K562 (cell line): ENCODE measurements at regions of chr3 and their contacts with region 1.

Region 1: DNA sequence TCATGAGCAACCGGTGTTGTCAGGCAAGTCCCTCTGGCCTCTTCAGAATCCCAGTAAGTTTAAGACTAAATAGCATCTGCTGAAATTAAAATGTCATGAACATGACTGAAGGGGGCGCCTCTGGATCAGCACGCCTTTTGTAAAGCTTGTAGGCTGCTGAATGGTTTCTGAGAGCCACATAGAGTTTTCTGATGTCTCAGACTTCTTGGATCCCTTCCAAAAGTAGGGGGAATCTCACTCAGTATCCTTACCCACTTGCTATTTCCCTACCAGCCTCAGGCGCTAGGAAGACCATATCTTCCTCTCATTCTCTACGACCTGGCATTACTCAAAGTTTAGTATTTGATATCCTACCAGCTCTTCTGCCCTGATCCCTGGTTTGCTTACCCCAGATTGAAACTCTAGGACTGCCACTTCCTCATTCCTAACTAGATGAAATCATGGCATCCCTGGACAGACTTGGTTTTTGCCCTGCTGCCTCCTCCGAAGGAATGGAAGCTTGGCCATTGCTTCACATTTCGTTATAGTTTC is 62.7 kb upstream of the CD47 start:
- DNase-seq: peak; percentile 9 to 72 (median 22)
- ATAC-seq: peak; percentile 90
- H3K4me3 ChIP-seq: no peak overlapping the region
- H3K27ac ChIP-seq: no peak overlapping the region
- H3K4me1 ChIP-seq: peaks cover 0 to 8% of the 10 kb centered on the region in 2 experiments; a peak in 3 of 5 replicates
- H3K27me3 ChIP-seq: no peaks in the 10 kb centered on the region
- CTCF ChIP-seq: peak; percentile 50 to 64 (median 63)
- EP300 ChIP-seq: no peak
- POLR2A ChIP-seq: no peak
- RAD21 ChIP-seq: peak; percentile 63 to 81

Region 2: DNA sequence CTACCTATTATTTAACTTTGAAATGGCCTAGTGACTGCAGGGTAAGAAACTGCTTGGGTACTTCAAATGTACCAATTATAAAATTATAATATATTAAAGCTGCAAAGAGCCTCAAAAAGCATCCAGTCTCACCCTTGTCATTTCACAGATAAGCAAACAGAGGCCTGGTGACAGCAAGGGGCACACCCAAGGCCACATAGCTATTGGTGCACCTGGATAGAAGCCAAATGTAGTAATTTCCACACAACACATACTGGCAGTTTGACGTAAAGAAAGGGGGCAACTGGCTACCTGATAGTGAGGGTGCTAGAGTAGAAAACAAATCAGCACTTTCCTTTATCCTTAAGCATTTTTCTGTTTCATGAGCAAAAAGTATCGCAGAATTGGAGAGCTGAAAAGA is 17.6 kb after region 1 on chr3:
- CTCF ChIA-PET with region 1: no interaction called
- POLR2A ChIA-PET with region 1: no interaction called
- in situ Hi-C with region 1: no loop called
- intact Hi-C with region 1: no loop called
- DNase-seq: no peak
- ATAC-seq: no peak
- H3K4me3 ChIP-seq: no peak overlapping the region
- H3K27ac ChIP-seq: no peak overlapping the region
- H3K4me1 ChIP-seq: peaks cover 0 to 2% of the 10 kb centered on the region in 2 experiments; a peak in 2 of 5 replicates
- H3K27me3 ChIP-seq: no peaks in the 10 kb centered on the region
- CTCF ChIP-seq: no peak
- EP300 ChIP-seq: no peak
- POLR2A ChIP-seq: no peak
- RAD21 ChIP-seq: no peak

Region 3: DNA sequence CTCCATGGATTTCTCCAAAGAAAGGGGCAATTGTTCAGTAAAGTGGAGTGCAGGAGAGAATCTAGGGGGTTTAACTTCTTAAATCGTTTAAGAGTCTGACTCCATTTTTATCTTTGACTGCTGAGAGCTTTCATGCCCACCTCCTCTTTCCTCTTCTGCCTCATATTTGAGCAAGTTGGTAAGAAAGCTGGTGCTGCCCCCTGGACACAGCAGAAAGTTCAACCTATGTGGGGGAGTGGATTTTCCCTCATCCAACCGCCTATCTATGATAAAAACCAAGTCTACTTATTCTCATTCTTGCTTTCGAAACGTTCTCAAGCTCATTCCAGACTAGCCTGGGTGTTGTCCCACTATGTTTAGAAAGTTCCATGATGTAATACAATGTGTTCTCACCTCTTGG is 168.8 kb after region 1 on chr3:
- CTCF ChIA-PET with region 1: no interaction called
- POLR2A ChIA-PET with region 1: no interaction called
- in situ Hi-C with region 1: no loop called
- intact Hi-C with region 1: loop called (anchors 10 kb)
- DNase-seq: peak in 1 of 4 experiments; percentile 4
- ATAC-seq: no peak
- H3K4me3 ChIP-seq: no peak overlapping the region
- H3K27ac ChIP-seq: no peak overlapping the region
- H3K4me1 ChIP-seq: no peaks in the 10 kb centered on the region
- H3K27me3 ChIP-seq: no peaks in the 10 kb centered on the region; a peak in 1 of 5 replicates
- CTCF ChIP-seq: peak in 2 of 3 experiments; percentile 14 to 22; a peak in 1 of 6 replicates
- EP300 ChIP-seq: no peak
- POLR2A ChIP-seq: no peak
- RAD21 ChIP-seq: peak in 1 of 2 experiments; percentile 32; a peak in 1 of 4 replicates

Region 4: GRCh38 chr3:108406661-108407206 is 253.2 kb after region 1 on chr3:
- CTCF ChIA-PET with region 1: no interaction called
- POLR2A ChIA-PET with region 1: no interaction called
- in situ Hi-C with region 1: loop called (anchors 10 kb)
- intact Hi-C with region 1: loop called (anchors 1 kb)
- DNase-seq: peak; percentile 36 to 60 (median 48)
- ATAC-seq: peak; percentile 96
- H3K4me3 ChIP-seq: no peak overlapping the region
- H3K27ac ChIP-seq: no peak overlapping the region
- H3K4me1 ChIP-seq: no peaks in the 10 kb centered on the region
- H3K27me3 ChIP-seq: no peaks in the 10 kb centered on the region; a peak in 1 of 5 replicates
- CTCF ChIP-seq: peak; percentile 55 to 75 (median 61)
- EP300 ChIP-seq: no peak
- POLR2A ChIP-seq: no peak
- RAD21 ChIP-seq: peak; percentile 78 to 84

Region 5: GRCh38 chr3:108477511-108478147 is 324.1 kb after region 1 on chr3:
- CTCF ChIA-PET with region 1: no interaction called
- POLR2A ChIA-PET with region 1: no interaction called
- in situ Hi-C with region 1: no loop called
- intact Hi-C with region 1: loop called (anchors 2 kb)
- DNase-seq: peak; percentile 35 to 62 (median 42)
- ATAC-seq: peak; percentile 82
- H3K4me3 ChIP-seq: no peak overlapping the region
- H3K27ac ChIP-seq: no peak overlapping the region
- H3K4me1 ChIP-seq: no peaks in the 10 kb centered on the region
- H3K27me3 ChIP-seq: no peaks in the 10 kb centered on the region
- CTCF ChIP-seq: peak; percentile 59 to 73 (median 61)
- EP300 ChIP-seq: no peak
- POLR2A ChIP-seq: no peak
- RAD21 ChIP-seq: peak; percentile 41 to 78